ENCODE measurements at regions of chr7 and their contacts with region 1.

Region 1: GRCh38 chr7:137898839-137899721 is 52.3 kb upstream of the DGKI start:
- DNase-seq: peak; percentile 89
- ATAC-seq: peak; percentile 69
- H3K4me3 Mint-ChIP-seq: no peak overlapping the region
- H3K27ac Mint-ChIP-seq: peak overlapping the region; percentile 48
- H3K4me1 Mint-ChIP-seq: peaks cover 41% of the 10 kb centered on the region
- H3K27me3 Mint-ChIP-seq: no peaks in the 10 kb centered on the region

Region 2: GRCh38 chr7:136874238-136875032 is 1024.6 kb before region 1 on chr7:
- CTCF ChIA-PET with region 1: no interaction called
- POLR2A ChIA-PET with region 1: no interaction called
- intact Hi-C with region 1: no loop called
- DNase-seq: no peak
- ATAC-seq: no peak
- H3K4me3 Mint-ChIP-seq: no peak overlapping the region
- H3K27ac Mint-ChIP-seq: no peak overlapping the region
- H3K4me1 Mint-ChIP-seq: no peaks in the 10 kb centered on the region
- H3K27me3 Mint-ChIP-seq: peaks cover 28% of the 10 kb centered on the region

Region 3: GRCh38 chr7:137469191-137469811 is 429.8 kb before region 1 on chr7:
- CTCF ChIA-PET with region 1: no interaction called
- POLR2A ChIA-PET with region 1: no interaction called
- intact Hi-C with region 1: no loop called
- DNase-seq: no peak
- ATAC-seq: no peak
- H3K4me3 Mint-ChIP-seq: no peak overlapping the region
- H3K27ac Mint-ChIP-seq: no peak overlapping the region
- H3K4me1 Mint-ChIP-seq: no peaks in the 10 kb centered on the region
- H3K27me3 Mint-ChIP-seq: peaks cover 5% of the 10 kb centered on the region

Region 4: GRCh38 chr7:137656227-137656849 is 242.7 kb before region 1 on chr7:
- CTCF ChIA-PET with region 1: interaction called, 65 read pairs
- POLR2A ChIA-PET with region 1: no interaction called
- intact Hi-C with region 1: loop called (anchors 1 to 2 kb)
- DNase-seq: peak; percentile 85
- ATAC-seq: peak; percentile 77
- H3K4me3 Mint-ChIP-seq: no peak overlapping the region
- H3K27ac Mint-ChIP-seq: no peak overlapping the region
- H3K4me1 Mint-ChIP-seq: no peaks in the 10 kb centered on the region
- H3K27me3 Mint-ChIP-seq: peaks cover 14% of the 10 kb centered on the region

Region 5: DNA sequence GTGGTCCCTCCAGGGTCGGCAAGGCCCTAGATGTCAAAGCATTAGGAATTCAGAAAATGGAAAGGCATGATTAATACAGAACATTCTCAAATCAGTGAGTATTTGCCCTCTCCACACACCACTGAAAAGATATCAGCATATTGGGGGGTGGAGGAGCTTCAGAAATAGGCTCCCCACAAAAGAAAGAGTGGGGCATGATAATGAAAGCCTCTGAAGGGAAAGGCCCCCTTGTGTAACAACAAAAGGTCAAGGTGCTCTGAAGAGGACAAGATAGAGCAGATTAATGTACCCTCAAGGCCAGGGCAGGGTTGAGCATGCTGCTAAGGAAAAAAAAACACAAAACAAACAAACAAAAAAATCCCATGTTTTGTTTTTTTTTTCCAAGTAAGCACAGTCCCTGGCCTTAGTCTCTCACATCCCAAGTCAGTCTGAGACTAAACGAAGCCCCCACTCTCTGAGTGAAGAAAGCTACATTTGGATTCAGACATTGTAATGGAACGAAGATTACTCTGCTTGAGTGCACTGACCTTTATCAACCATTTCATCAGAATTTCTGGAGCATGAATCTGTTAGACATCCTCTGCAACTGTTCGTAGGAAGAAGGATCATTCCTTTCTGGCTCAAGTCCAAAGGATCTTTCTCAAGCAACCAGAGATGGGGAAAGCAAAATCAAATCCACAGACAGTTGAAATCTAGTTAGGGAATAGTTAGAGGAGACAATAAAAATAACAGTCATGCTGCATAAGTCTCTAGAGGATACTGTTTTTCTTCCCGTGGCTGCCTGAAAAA is 24.9 kb before region 1 on chr7:
- CTCF ChIA-PET with region 1: interaction called, 3 read pairs
- POLR2A ChIA-PET with region 1: interaction called, 3 read pairs
- intact Hi-C with region 1: loop called in 1 of 2 experiments (anchors 1 kb)
- DNase-seq: no peak
- ATAC-seq: peak; percentile 17
- H3K4me3 Mint-ChIP-seq: no peak overlapping the region
- H3K27ac Mint-ChIP-seq: peak overlapping the region; percentile 77
- H3K4me1 Mint-ChIP-seq: peaks cover 17% of the 10 kb centered on the region
- H3K27me3 Mint-ChIP-seq: no peaks in the 10 kb centered on the region

Region 6: DNA sequence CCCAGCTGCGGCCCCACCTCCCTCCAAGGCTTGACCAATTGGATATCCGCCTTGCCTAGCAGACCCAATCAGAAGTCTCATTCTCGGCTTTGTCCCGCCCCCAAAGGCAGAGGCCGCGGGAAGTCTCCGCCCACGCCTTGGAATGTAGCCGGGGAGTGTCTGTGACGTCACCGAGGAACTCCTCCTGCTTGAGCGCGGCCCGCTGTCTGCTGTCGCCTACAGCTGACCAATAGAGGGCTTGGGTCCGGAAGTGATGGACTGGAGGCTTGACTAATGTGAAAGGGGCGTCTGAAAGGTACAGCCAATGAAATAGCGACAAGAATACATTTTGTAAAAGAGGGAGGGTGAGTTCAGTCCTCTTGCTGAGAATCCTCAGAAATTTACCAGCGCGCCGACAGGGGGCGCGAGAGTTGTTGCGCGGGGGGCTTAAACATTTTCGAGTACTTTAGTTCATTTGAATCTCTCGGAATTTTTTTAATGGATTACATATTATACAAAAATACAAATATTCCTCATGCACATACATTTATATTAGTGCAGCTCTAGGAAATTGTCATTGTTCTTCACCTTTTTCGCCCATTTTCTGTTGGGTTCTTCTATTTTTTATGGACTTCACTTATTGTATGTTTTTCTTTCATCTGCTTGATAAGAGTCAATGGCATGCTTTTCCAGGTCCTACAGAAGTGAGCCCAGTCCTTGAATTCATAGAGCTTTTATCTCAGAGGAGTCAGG is 103.2 kb after region 1 on chr7:
- CTCF ChIA-PET with region 1: interaction called, 247 read pairs
- POLR2A ChIA-PET with region 1: no interaction called
- intact Hi-C with region 1: no loop called
- DNase-seq: peak; percentile 98
- ATAC-seq: peak; percentile 96
- H3K4me3 Mint-ChIP-seq: peak overlapping the region; percentile 82
- H3K27ac Mint-ChIP-seq: peak overlapping the region; percentile 92
- H3K4me1 Mint-ChIP-seq: peaks cover 24% of the 10 kb centered on the region
- H3K27me3 Mint-ChIP-seq: no peaks in the 10 kb centered on the region

Region 7: DNA sequence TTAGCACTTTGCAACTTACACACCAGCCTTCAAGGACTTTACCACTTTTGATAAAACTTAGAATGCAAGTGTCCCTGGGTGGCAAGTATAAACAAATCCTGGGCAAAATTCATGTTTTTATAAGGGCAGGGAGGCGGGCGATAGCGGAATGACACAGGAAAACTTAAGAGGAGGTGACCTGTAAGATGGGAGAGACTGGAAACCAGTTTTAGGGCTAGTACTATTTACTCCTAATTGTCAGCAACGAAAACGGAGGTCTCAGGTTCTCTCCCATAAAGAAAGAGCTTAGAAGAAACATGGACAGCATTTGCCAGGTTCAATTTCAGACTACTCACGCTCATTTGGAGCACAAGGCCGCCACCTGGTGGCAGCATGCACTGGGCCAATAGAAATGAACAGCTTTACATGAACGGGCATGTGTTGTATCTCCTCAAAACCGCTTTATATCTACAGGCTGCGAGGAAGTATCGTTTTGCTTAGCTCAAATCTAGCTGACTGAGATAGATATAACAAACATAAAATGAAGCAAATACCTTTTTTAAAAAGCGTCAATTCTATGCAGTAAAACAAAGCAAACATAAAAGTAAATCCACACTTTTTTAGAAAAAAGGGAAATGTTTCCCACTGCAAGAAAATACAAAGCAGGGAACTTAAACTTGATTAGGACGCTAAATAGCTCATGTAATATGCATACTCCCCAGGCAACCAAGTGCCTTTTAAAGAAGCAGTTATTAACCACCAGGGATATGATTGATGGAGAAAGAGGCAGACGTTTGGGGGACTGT is 839.7 kb after region 1 on chr7:
- CTCF ChIA-PET with region 1: interaction called, 3 read pairs
- POLR2A ChIA-PET with region 1: no interaction called
- intact Hi-C with region 1: loop called (anchors 2 to 10 kb)
- DNase-seq: peak; percentile 90
- ATAC-seq: peak; percentile 94
- H3K4me3 Mint-ChIP-seq: no peak overlapping the region
- H3K27ac Mint-ChIP-seq: no peak overlapping the region
- H3K4me1 Mint-ChIP-seq: peaks cover 2% of the 10 kb centered on the region
- H3K27me3 Mint-ChIP-seq: no peaks in the 10 kb centered on the region